Aorta (tissue), 5 donors: ENCODE measurements at regions of chr22 and their contacts with region 1.

Region 1: DNA sequence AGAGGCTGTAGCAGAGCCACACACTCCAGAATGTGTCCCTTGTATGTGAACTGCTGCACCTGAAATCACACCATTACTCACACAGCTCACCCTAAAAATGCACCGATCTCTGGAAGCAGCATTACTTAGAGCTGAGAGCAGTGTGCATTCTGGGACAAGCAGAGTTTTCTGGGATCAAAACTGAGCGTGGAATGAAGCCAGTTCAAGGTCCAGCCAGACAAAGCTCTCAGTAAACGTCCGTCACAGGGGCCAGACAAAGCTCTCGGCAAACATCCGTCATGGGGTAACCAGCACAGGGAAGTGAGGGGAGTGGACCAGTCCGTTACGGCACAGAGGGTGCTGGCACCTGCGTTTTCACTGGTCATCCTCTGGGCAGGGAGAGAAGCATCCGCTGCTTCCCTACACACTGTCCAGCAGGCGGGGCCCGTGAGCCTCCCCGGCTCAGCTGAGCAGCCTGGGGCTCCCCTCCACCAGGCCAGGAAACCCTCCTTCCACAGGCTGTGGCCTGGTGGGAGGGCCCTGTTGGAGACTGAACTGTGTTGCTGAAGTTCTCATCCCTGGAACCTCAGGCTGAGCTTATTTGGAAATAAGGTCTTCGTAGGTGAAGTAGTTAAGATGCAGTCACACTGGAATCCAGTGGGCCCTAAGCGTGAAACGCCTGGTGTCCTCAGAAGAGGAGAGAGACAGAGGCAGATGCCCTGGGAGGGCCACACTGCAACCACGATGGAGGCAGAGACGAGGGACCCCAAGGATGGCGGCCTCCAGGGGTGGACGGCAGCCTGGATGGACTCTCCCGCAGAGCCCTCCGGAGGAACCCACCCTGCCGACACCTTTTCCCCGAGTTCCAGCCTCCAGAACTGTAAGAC is 883.9 kb downstream of the BRD1 start:
- DNase-seq: peak in 1 of 2 donors; percentile 73
- ATAC-seq: peak; percentile 62
- H3K4me3 ChIP-seq: no peak overlapping the region
- H3K27ac ChIP-seq: no peak overlapping the region
- H3K4me1 ChIP-seq: no peaks in the 10 kb centered on the region
- H3K27me3 ChIP-seq: no peaks in the 10 kb centered on the region

Region 2: DNA sequence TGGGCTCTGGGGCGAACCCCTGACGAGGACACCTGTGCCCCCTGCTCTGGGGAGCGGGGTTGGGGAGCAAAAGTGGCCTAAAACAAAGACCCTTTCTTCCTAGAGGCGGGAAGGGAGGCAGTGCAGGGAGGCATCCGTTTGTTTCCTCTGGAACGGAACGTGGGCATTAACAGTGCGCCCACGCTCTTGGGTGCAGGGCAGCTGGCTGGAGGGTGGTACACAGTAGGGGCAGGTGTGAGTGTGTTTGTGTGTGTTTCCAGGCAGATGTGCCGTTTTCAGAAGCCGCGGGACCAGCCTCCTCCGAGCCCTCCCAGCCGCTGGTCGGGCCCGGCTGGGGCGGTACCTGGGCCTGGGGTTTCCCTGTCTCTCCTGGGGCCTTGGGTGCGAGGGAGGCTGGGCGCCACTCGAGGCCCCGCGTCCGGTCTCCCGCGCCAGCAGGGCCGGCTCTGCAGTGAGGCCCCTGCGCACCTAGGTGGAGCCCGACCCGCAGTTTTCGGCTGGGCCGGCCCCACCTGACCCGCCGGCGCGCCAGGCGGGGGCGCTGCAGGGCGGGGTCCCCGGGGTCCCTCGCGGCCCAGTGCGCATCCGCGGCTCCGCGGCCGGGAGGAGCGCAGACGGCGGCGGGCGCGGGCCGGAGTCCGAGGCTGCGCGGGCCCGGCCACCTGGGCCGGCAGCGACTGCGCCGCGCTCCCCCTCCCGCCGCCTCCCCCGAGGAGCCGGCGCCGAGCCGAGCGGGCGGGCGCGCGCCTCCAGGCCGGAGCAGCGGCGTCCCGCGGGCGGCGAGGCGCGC is 368.8 kb before region 1 on chr22:
- intact Hi-C with region 1: loop called in 1 of 2 experiments (anchors 10 kb)
- DNase-seq: peak in 1 of 2 donors; percentile 64
- ATAC-seq: peak; percentile 44
- H3K4me3 ChIP-seq: peak overlapping the region; percentile 41 to 79
- H3K27ac ChIP-seq: peak overlapping the region in 1 of 2 donors; percentile 6
- H3K4me1 ChIP-seq: no peaks in the 10 kb centered on the region
- H3K27me3 ChIP-seq: no peaks in the 10 kb centered on the region

Region 3: GRCh38 chr22:48905206-48905975 is 38.4 kb before region 1 on chr22:
- intact Hi-C with region 1: no loop called
- DNase-seq: peak in 1 of 2 donors; percentile 19
- ATAC-seq: no peak
- H3K4me3 ChIP-seq: no peak overlapping the region
- H3K27ac ChIP-seq: no peak overlapping the region
- H3K4me1 ChIP-seq: no peaks in the 10 kb centered on the region
- H3K27me3 ChIP-seq: no peaks in the 10 kb centered on the region

Region 4: GRCh38 chr22:49026494-49027380 is 82.9 kb after region 1 on chr22:
- intact Hi-C with region 1: loop called in 1 of 2 experiments (anchors 5 kb)
- DNase-seq: peak; percentile 31 to 60
- ATAC-seq: no peak
- H3K4me3 ChIP-seq: no peak overlapping the region
- H3K27ac ChIP-seq: no peak overlapping the region
- H3K4me1 ChIP-seq: no peaks in the 10 kb centered on the region
- H3K27me3 ChIP-seq: no peaks in the 10 kb centered on the region